ENCODE measurements at regions of chr7 and their contacts with region 1.

Region 1: DNA sequence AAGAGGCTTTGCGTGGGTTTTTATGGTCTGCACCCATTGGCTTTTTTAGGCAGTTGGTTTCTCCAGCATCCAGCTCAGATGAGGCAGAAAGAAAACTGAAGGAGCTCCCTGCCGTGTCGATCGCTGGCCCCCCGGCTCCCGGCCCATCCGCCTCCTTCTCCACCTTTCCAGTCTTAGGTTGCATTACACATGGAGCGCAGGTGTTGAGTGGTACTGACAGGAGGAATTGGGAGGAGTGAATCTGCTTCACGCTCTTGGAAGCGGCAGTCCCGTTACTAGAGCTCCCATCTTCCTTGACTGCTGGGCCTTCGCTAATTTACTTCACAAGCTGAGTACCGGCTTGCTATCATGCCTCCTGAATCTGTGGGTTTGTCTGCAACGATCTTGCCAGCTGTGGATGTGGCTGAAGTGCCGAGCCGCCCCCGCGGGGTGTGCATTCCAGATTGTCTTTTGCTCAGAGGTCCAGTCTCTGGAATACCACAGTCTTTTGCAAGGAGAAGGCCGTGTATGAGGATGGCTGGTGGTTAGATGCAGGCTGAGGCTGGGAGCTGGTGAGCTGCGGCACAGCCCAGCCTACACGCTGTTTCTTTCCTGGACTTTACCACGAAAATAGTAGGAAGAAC is 17.1 kb downstream of the IQCE start:
- DNase-seq: no peak
- H3K4me3 ChIP-seq: no peak overlapping the region
- H3K27ac ChIP-seq: no peak overlapping the region
- H3K4me1 ChIP-seq: peaks cover 0 to 5% (median 2%) of the 10 kb centered on the region in 4 experiments
- H3K27me3 ChIP-seq: no peaks in the 10 kb centered on the region

Region 2: DNA sequence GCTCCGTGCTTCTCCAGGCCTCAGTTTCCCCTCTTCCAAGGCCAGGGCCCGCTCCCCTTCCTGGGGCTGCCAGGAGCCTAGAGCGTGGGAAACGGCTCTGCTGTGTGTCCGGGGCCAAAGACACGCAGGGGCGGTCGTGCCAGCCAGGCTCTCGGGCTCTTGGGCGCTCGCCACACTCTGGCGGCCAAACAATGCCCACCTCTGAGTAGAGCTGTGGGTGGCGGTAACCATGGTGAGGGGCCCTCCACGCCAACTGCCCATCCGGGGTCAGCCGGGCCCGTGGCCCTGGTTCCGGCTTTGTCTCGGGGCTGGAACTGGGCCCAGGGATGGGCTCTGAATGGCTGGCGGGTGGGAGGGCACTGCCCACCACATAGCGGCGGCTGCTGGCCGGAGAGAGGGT is 115.6 kb before region 1 on chr7:
- CTCF ChIA-PET with region 1: no interaction called
- POLR2A ChIA-PET with region 1: no interaction called
- DNase-seq: no peak
- H3K4me3 ChIP-seq: no peak overlapping the region
- H3K27ac ChIP-seq: no peak overlapping the region
- H3K4me1 ChIP-seq: peaks cover 0 to 3% (median 0%) of the 10 kb centered on the region in 4 experiments
- H3K27me3 ChIP-seq: no peaks in the 10 kb centered on the region

Region 3: GRCh38 chr7:2477447-2478398 is 98.1 kb before region 1 on chr7:
- CTCF ChIA-PET with region 1: no interaction called
- POLR2A ChIA-PET with region 1: no interaction called
- DNase-seq: peak; percentile 71 to 92 (median 89)
- H3K4me3 ChIP-seq: peak overlapping the region in 4 of 7 experiments; percentile 44 to 62 (median 50)
- H3K27ac ChIP-seq: no peak overlapping the region
- H3K4me1 ChIP-seq: peaks cover 0 to 29% (median 21%) of the 10 kb centered on the region in 4 experiments
- H3K27me3 ChIP-seq: no peaks in the 10 kb centered on the region

Region 4: DNA sequence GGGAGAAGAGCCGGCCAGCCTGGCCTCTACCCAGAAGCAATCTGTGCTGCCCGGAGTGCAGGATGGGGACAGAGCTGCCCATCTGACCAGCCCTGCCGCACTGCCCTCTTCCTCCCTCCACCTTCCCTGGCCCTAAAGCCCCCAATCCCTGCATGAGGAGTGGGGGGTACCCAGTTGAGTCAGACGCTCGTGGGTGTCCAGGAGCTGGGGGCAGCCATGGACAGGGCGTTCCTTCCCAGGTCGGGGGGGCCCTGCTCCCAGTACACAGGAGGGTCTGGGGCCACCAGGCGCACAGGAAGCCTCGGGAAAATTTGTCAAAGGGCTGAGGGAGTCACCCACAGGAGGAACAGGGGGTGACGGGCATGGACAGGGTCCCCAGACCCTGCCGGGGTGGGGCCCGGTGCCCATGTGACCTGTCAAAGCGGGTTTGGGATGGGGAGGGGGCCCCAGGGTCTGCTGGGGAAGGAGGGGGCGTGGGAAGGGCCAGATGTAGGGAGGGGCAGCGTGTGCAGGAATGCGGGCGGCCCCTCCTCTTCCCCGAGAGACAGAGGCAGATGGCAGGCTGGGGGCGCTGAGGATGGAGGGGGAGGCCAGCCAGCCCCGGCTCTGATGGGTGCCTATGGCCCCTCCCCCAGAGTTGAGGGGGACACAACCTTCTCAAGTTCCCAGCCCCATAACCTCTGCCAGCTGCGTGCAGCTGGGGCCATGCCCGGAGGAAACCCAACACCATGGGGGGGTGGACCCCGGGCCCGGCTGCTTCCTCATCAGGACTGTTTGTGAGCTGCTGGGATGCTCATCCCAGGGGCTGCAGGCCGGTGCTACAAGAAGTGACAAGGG is 78.1 kb before region 1 on chr7:
- CTCF ChIA-PET with region 1: no interaction called
- POLR2A ChIA-PET with region 1: interaction called, 11 read pairs
- DNase-seq: peak; percentile 22 to 83 (median 79)
- H3K4me3 ChIP-seq: peak overlapping the region in 2 of 7 experiments; percentile 26 to 33
- H3K27ac ChIP-seq: no peak overlapping the region
- H3K4me1 ChIP-seq: peaks cover 0 to 36% (median 30%) of the 10 kb centered on the region in 4 experiments
- H3K27me3 ChIP-seq: no peaks in the 10 kb centered on the region